Prostate gland (tissue), 2 donors: ENCODE measurements at regions of chr5 and their contacts with region 1.

Region 1: DNA sequence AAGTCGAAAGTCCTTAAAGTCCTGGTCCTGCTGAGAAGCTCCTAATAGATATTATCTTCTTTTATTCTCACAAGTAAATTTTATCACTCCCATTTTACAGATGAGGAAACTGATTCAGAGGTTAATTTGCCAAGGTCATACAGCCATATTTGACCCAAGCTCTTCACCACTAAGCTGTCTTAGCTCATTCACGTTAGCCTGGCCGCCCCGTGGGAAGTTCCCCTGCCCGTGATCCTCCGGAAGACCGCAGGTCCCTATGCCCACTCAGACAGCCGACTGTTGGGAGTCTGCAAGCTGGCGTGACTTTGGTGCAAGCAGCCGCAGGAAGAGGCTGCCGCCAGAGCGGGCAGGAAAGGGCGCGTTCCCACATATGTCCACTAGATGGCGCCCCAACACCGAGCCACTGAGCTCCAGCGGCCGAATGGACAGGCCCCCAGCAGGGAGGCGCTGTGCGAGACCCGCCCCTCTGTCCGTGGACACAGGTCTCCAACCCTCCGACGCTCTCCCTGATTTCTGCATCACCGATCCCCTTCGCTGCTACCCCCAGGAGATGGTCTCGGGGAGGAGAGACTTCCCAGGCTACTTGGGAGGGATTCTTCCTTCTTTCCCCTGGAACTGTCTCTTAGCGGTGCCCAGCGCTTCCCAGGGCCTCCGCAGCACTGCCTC is 10.0 kb upstream of the ARAP3 start:
- DNase-seq: peak; percentile 83
- H3K4me3 ChIP-seq: peak overlapping the region; percentile 9 to 22
- H3K27ac ChIP-seq: no peak overlapping the region
- H3K4me1 ChIP-seq: no peaks in the 10 kb centered on the region
- H3K27me3 ChIP-seq: no peaks in the 10 kb centered on the region
- CTCF ChIP-seq: peak; percentile 96 to 99 (median 98)
- POLR2A ChIP-seq: no peak

Region 2: DNA sequence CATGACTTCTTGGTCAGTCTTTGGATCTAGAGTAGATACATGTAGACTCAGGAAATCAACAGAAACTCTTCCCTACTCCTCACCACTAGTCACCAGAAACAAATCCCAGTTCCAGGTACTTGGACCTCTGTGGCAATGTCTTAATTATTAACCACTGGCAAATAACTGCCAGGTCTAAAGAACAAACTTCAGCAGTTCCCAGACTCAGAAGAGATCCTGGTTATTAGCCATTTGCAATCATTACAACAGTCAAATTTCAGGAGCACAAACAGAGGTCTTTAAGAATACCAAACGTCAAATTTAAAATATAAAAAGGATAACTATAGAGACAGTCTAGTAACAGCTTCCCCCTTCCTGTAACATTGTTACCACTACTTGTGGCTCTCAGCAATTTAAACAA is 83.4 kb before region 1 on chr5:
- intact Hi-C with region 1: no loop called
- DNase-seq: no peak
- H3K4me3 ChIP-seq: no peak overlapping the region
- H3K27ac ChIP-seq: no peak overlapping the region
- H3K4me1 ChIP-seq: no peaks in the 10 kb centered on the region
- H3K27me3 ChIP-seq: no peaks in the 10 kb centered on the region
- CTCF ChIP-seq: no peak
- POLR2A ChIP-seq: no peak

Region 3: DNA sequence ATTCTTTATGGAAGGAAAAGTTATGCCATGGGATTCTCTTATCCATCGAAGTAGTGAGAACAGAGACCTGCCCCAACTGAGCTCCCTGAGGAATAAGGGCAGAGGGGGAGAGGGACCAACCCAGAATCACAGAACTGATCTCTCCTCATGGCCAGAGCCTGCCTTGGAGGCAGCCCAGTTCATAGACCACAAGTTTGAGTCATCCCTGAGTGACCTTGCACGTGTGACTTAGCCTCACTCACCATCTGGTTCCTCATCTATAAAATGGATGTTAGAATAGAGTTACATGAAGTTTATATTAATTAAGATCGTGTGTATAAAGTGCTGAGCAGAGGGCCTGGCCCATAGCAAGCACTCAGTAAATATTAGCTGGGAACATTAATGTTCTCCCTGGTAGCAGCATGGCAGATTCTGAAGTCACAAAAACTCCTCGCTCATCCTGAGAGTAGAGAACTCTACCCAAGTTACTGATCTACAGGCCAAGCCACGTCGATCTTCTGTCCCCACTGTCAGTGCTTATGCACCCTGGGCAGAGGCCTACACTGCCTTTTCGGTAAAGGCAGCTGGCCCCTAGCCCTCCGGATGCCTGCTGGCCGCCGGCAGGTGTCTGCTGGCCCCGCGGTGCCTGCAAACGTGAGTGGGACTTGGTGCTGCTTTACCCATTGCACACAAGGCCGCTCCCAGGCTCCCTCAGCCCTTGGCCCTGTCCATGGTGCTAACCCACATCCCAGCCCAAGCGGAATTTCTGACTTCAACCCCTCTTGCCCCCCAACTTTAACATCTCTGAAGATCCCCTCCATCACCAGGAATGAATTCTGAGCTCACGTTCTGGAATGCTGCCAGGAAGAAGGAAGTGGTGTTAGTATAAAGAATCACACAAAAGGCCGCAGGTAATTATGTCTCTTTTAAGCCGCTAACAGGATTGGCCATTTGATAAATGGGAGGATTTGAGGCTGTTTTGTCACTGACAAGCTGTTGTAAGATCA is 51.2 kb after region 1 on chr5:
- intact Hi-C with region 1: no loop called
- DNase-seq: no peak
- H3K4me3 ChIP-seq: no peak overlapping the region
- H3K27ac ChIP-seq: no peak overlapping the region
- H3K4me1 ChIP-seq: no peaks in the 10 kb centered on the region
- H3K27me3 ChIP-seq: no peaks in the 10 kb centered on the region
- CTCF ChIP-seq: no peak
- POLR2A ChIP-seq: no peak

Region 4: DNA sequence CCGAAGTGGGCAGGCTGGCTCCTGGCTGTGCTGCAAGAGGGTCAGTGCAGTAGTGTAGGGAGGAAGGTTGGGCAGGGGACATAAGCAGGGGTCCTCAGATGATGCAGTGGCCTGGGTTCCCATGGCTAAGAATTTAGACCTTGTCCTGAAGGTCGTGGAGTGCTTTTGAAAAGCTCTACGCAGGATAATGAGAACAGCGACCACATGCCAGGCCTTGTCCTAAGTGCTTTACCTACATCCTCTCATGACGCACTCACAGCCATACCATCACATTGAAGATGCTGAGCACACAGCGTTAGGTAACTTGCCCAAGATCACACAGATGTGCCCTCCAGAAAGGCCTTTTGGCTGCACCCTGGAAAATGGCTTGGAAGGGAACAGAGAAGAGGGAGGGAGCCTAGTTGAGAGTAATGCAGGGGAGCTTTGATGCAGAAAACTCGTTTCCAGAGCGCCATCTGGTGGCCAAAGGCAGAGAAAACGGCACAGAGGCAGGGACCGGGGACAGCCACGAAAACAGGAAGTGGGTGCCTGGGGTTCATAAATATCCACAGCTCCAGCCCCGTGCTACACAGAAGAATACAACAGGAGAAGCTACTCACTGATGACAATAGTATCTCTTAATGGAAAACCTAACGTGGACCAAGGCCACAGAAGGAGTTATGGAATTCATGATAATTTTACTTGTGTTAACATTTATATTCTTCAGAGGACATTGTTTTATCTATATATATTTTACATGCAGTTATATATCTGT is 268.6 kb after region 1 on chr5:
- intact Hi-C with region 1: loop called (anchors 2 kb)
- DNase-seq: peak; percentile 84
- H3K4me3 ChIP-seq: no peak overlapping the region
- H3K27ac ChIP-seq: peak overlapping the region; percentile 41 to 44
- H3K4me1 ChIP-seq: no peaks in the 10 kb centered on the region
- H3K27me3 ChIP-seq: no peaks in the 10 kb centered on the region
- CTCF ChIP-seq: peak; percentile 76 to 94 (median 88)
- POLR2A ChIP-seq: no peak